Gastrocnemius medialis (tissue), 4 donors: ENCODE measurements at regions of chr1 and their contacts with region 1.

Region 1: GRCh38 chr1:12052008-12052573 is 11.0 kb upstream of the TNFRSF8 start:
- DNase-seq: peak; percentile 68 to 84
- ATAC-seq: peak; percentile 99
- H3K4me3 ChIP-seq: peak overlapping the region in 1 of 4 donors; percentile 25
- H3K27ac ChIP-seq: peak overlapping the region; percentile 76 to 86 (median 82)
- H3K4me1 ChIP-seq: peaks cover 18 to 23% of the 10 kb centered on the region in 2 donors
- H3K27me3 ChIP-seq: no peaks in the 10 kb centered on the region
- CTCF ChIP-seq: no peak
- POLR2A ChIP-seq: no peak

Region 2: DNA sequence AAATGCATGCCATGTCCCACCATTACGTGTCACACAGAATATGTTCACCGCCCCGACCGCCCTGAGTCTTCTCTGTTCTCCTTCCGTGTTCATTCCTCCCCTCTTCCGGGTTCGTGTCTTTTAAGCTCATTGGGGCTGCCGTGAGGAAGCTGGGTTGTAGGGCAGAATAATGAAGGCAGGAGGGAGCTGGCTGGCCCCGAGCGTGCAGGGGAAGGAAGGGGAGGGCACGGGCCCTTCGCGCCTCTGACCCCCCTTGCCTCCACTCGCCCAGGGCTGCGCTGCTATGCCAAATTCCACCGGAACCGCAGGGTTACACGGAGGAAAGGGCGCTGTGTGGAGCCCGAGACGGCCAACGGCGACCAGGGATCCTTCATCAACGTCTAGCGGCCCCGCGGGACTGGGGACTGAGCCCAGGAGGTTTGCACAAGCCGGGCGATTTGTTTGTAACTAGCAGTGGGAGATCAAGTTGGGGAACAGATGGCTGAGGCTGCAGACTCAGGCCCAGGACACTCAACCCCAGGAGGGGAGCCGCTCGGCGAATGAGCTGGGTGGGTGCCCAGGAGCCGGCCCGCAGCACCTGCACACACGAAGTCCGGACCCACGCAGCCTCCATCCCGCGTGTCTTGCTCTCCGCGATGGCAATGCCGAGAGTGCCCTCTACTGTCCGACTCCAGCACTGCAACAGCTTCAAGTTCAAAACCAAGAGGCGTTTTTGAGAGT is 332.6 kb before region 1 on chr1:
- in situ Hi-C with region 1: no loop called
- intact Hi-C with region 1: no loop called
- DNase-seq: peak; percentile 47 to 67
- ATAC-seq: peak; percentile 65 to 69
- H3K4me3 ChIP-seq: peak overlapping the region; percentile 29 to 55 (median 50)
- H3K27ac ChIP-seq: no peak overlapping the region
- H3K4me1 ChIP-seq: peaks cover 0 to 8% of the 10 kb centered on the region in 2 donors
- H3K27me3 ChIP-seq: no peaks in the 10 kb centered on the region
- CTCF ChIP-seq: peak; percentile 73 to 96 (median 88)
- POLR2A ChIP-seq: no peak

Region 3: GRCh38 chr1:12019858-12020509 is 32.1 kb before region 1 on chr1:
- in situ Hi-C with region 1: no loop called
- intact Hi-C with region 1: loop called (anchors 2 kb)
- DNase-seq: no peak
- ATAC-seq: peak in 1 of 2 donors; percentile 3
- H3K4me3 ChIP-seq: peak overlapping the region; percentile 67 to 93 (median 84)
- H3K27ac ChIP-seq: peak overlapping the region; percentile 83 to 90 (median 84)
- H3K4me1 ChIP-seq: peaks cover 6 to 8% of the 10 kb centered on the region in 2 donors
- H3K27me3 ChIP-seq: no peaks in the 10 kb centered on the region
- CTCF ChIP-seq: no peak
- POLR2A ChIP-seq: no peak